Naive thymus-derived CD4-positive, alpha-beta T cell (primary cell): ENCODE measurements at regions of chr14 and their contacts with region 1.

Region 1: DNA sequence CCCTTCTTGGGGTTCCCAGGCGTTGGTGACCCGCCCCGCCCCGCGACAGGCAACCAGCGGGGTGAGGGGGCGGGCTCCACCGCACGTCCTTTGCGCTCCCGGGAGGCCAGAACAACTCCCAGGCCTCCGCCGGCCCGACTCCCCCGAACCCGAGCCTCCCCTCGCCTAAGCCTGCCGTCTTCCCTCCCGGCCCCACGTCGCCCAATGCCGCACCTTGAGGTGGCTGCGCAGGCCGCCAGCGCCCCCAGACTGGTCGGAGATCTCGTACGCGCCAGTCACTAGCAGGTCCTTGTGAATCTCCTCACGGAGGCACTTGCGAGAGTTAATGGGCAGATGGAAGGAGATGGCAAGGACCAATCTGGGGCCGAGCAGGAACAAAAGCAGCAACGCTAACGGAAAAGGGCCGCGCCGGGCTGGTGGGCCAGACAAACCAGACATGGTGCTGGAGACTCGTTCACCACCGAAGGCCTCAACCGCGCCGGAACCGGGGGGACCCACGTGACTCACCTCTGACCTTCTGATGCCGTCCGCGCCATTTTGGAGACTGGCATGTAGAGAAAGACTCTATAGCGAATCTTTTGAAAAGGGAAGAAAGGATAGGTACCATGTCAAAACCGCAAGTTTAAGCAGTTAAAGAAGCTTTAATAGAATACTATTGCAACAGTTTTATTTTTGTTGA is at the start of gene TMED10:
- DNase-seq: peak; percentile 86 to 96 (median 94)
- ATAC-seq: peak; percentile 84
- H3K4me3 ChIP-seq: peak within 1 kb of the TSS; percentile 93
- H3K4me3 Mint-ChIP-seq: peak within 1 kb of the TSS; percentile 77 to 96 (median 91)
- H3K27ac ChIP-seq: peak within 1 kb of the TSS; percentile 98
- H3K27ac Mint-ChIP-seq: peak within 1 kb of the TSS; percentile 95 to 99 (median 97)
- H3K4me1 ChIP-seq: peaks cover 27 to 33% of the 10 kb centered on the region in 2 donors
- H3K4me1 Mint-ChIP-seq: peaks cover 27 to 60% (median 53%) of the 10 kb centered on the region in 7 donors
- H3K27me3 ChIP-seq: no peaks in the 10 kb centered on the region
- H3K27me3 Mint-ChIP-seq: peaks cover 0 to 7% (median 0%) of the 10 kb centered on the region in 5 donors
- total RNA-seq, gene TMED10: 155 to 233 (median 171) TPM

Region 2: DNA sequence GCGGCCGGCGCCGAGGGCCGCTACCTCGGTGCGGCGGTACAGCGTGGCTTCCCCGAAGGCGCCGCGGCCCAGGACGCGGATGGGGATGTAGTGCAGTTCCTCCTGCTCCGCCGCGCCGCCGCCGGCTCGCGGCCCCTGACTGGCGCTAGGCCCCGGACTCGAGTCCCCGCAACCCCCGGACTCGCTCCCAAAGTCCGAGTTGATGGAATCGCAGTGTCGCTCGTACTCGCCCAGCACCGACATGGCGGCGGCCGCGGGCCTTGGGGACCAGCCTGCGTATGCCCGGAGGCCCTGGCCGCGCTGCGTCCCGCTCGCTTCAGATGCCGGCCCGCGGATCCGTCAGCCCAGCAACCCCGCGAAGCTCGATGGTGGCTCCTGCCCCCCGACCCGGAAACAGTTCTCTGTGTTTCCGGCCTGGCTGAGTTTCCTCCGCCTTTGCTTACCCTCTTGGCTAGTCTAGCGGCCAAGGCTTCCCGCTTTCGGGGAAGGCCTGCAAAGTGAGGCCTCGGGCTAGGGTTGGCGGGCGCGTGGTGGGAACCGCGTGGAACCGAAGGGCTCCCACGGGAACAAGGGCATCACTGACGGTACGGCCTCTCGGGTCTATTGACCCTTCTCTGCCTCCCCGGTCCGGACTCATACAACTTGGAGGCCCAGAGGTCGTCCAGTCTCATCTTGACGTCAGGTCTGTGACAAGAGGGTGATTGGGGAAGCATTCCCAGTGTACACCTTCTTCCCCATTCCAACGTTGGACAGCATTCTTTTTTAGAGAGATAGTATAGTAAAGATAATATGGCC is 49.4 kb before region 1 on chr14 and contains the start of gene NEK9:
- CTCF ChIA-PET with region 1: no interaction called
- POLR2A ChIA-PET with region 1: interaction called, 4 read pairs
- intact Hi-C with region 1: loop called (anchors 1 kb)
- DNase-seq: peak; percentile 78 to 91 (median 87)
- ATAC-seq: peak; percentile 92
- H3K4me3 ChIP-seq: peak within 1 kb of the TSS; percentile 87
- H3K4me3 Mint-ChIP-seq: peak within 1 kb of the TSS; percentile 87 to 99 (median 96)
- H3K27ac ChIP-seq: peak within 1 kb of the TSS; percentile 89
- H3K27ac Mint-ChIP-seq: peak within 1 kb of the TSS; percentile 95 to 98 (median 98)
- H3K4me1 ChIP-seq: peaks cover 22 to 29% of the 10 kb centered on the region in 2 donors
- H3K4me1 Mint-ChIP-seq: peaks cover 36 to 48% (median 44%) of the 10 kb centered on the region in 7 donors
- H3K27me3 ChIP-seq: no peaks in the 10 kb centered on the region
- H3K27me3 Mint-ChIP-seq: no peaks in the 10 kb centered on the region
- total RNA-seq, gene NEK9: 81.7 to 141 (median 84.7) TPM

Region 3: DNA sequence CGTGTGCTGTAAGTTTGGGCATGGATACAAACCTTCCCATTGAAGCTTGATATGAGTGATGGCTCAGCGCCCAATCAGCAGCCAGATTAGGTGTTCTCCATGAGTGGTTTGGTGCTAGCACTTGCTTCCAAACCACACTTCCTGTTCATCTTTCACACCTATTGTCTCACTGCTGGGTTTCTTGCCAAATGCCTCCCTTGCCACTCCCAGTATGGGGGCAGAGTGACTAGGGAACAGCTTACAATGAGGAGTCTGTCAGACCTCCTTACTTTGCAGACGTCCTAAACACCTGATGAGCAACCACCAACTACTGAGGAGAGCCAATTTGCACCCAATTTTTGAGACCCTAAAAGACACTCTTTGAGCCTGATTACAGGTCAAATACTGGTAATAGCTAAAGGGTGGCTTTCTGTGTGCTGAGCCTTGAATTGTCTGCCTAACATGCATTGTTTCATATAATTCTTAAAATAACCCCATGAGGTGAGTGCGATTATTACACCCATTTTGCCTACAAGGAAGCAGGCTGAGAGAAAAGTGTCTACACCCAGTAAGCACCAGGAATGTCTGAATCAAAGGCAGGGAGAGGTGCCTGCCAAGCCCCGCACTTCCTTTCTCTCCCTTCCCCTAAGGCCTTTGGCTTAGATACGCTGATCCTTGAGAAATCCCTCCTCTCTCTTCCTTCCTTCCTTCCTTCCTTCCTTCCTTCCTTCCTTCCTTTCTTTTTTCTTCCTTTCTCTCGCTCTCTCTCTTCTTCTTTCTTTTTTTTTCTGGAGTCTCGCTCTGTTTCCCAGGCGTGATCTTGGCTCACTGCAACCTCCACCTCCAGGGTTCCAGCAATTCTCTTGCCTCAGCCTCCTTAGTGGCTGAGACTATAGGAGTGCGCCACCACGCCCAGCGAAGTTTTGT is 54.1 kb after region 1 on chr14:
- CTCF ChIA-PET with region 1: interaction called, 4 read pairs
- POLR2A ChIA-PET with region 1: interaction called, 3 read pairs
- intact Hi-C with region 1: loop called (anchors 1 to 2 kb)
- DNase-seq: peak in 6 of 9 donors; percentile 26 to 50 (median 41)
- ATAC-seq: peak; percentile 59
- H3K4me3 ChIP-seq: no peak overlapping the region
- H3K4me3 Mint-ChIP-seq: peak overlapping the region; percentile 3 to 79 (median 50)
- H3K27ac ChIP-seq: no peak overlapping the region
- H3K27ac Mint-ChIP-seq: peak overlapping the region; percentile 42 to 96 (median 73)
- H3K4me1 ChIP-seq: peaks cover 33 to 41% of the 10 kb centered on the region in 2 donors
- H3K4me1 Mint-ChIP-seq: peaks cover 43 to 75% (median 66%) of the 10 kb centered on the region in 7 donors
- H3K27me3 ChIP-seq: no peaks in the 10 kb centered on the region
- H3K27me3 Mint-ChIP-seq: peaks cover 0 to 22% (median 0%) of the 10 kb centered on the region in 5 donors

Region 4: GRCh38 chr14:75258615-75259466 is 82.6 kb after region 1 on chr14:
- CTCF ChIA-PET with region 1: no interaction called
- POLR2A ChIA-PET with region 1: interaction called, 6 read pairs
- intact Hi-C with region 1: loop called (anchors 1 kb)
- DNase-seq: peak; percentile 97 to 100 (median 100)
- ATAC-seq: peak; percentile 94
- H3K4me3 ChIP-seq: peak overlapping the region; percentile 75
- H3K4me3 Mint-ChIP-seq: peak overlapping the region; percentile 75 to 95 (median 92)
- H3K27ac ChIP-seq: peak overlapping the region; percentile 94
- H3K27ac Mint-ChIP-seq: peak overlapping the region; percentile 98 to 100 (median 100)
- H3K4me1 ChIP-seq: peaks cover 16 to 19% of the 10 kb centered on the region in 2 donors
- H3K4me1 Mint-ChIP-seq: peaks cover 14 to 50% (median 32%) of the 10 kb centered on the region in 7 donors
- H3K27me3 ChIP-seq: peaks cover 0 to 3% of the 10 kb centered on the region in 2 donors
- H3K27me3 Mint-ChIP-seq: peaks cover 0 to 74% (median 0%) of the 10 kb centered on the region in 5 donors

Region 5: GRCh38 chr14:75522224-75522982 is 346.1 kb after region 1 on chr14 and contains the start of gene BATF:
- CTCF ChIA-PET with region 1: no interaction called
- POLR2A ChIA-PET with region 1: no interaction called
- intact Hi-C with region 1: loop called in 1 of 2 experiments (anchors 5 kb)
- DNase-seq: peak; percentile 47 to 83 (median 76)
- ATAC-seq: peak; percentile 89
- H3K4me3 ChIP-seq: peak within 1 kb of the TSS; percentile 84
- H3K4me3 Mint-ChIP-seq: peak within 1 kb of the TSS; percentile 92 to 100 (median 98)
- H3K27ac ChIP-seq: peak within 1 kb of the TSS; percentile 82
- H3K27ac Mint-ChIP-seq: peak within 1 kb of the TSS; percentile 91 to 99 (median 95)
- H3K4me1 ChIP-seq: peaks cover 44 to 49% of the 10 kb centered on the region in 2 donors
- H3K4me1 Mint-ChIP-seq: peaks cover 51 to 80% (median 75%) of the 10 kb centered on the region in 7 donors
- H3K27me3 ChIP-seq: no peaks in the 10 kb centered on the region
- H3K27me3 Mint-ChIP-seq: no peaks in the 10 kb centered on the region
- total RNA-seq, gene BATF: 6.8 to 70.0 (median 10.6) TPM